ENCODE measurements at regions of chr10 and their contacts with region 1.

Region 1: GRCh38 chr10:88926566-88927415 is 25.8 kb downstream of the ACTA2 start:
- DNase-seq: no peak
- ATAC-seq: peak in 3 of 4 donors; percentile 38 to 77 (median 58)
- H3K4me3 ChIP-seq: no peak overlapping the region
- H3K27ac ChIP-seq: peak overlapping the region; percentile 48
- H3K4me1 ChIP-seq: peaks cover 3% of the 10 kb centered on the region
- H3K27me3 ChIP-seq: no peaks in the 10 kb centered on the region
- CTCF ChIP-seq: no peak

Region 2: DNA sequence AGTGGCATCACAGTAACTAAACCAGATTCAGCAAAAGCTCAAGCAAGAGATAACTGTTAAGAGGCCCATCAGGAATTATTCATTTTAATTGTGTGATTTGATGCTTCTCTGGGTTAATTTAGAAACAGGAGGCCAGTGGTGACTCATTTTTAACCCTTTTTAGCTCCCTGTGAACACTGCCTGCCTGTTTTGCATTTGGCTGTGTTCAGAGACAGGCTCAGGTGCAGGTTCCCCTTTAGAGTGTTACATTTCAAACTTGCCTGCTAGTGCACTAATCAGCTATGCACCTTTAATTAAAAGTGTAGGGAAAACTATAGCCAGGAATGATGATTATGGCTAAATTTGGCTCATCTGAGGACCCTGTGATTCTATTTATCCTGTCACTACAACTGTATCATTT is 40.2 kb before region 1 on chr10:
- intact Hi-C with region 1: loop called in 1 of 2 experiments (anchors 5 kb)
- DNase-seq: no peak
- ATAC-seq: no peak
- H3K4me3 ChIP-seq: no peak overlapping the region
- H3K27ac ChIP-seq: no peak overlapping the region
- H3K4me1 ChIP-seq: peaks cover 7% of the 10 kb centered on the region
- H3K27me3 ChIP-seq: peaks cover 0 to 9% (median 0%) of the 10 kb centered on the region in 3 donors
- CTCF ChIP-seq: no peak

Measured in psoas muscle (tissue), 8 donors.